ENCODE measurements at regions of chr13 and their contacts with region 1.

Region 1: GRCh38 chr13:50911937-50912795 is 2.6 kb downstream of the RNASEH2B start:
- DNase-seq: peak; percentile 98
- ATAC-seq: peak; percentile 73
- H3K4me3 Mint-ChIP-seq: peak overlapping the region; percentile 91
- H3K27ac Mint-ChIP-seq: peak overlapping the region; percentile 96
- H3K4me1 Mint-ChIP-seq: peaks cover 68% of the 10 kb centered on the region
- H3K27me3 Mint-ChIP-seq: no peaks in the 10 kb centered on the region

Region 2: GRCh38 chr13:50081679-50082425 is 830.3 kb before region 1 on chr13:
- CTCF ChIA-PET with region 1: interaction called, 27 read pairs
- POLR2A ChIA-PET with region 1: interaction called, 38 read pairs
- DNase-seq: peak; percentile 99
- ATAC-seq: peak; percentile 79
- H3K4me3 Mint-ChIP-seq: peak overlapping the region; percentile 99
- H3K27ac Mint-ChIP-seq: peak overlapping the region; percentile 99
- H3K4me1 Mint-ChIP-seq: peaks cover 42% of the 10 kb centered on the region
- H3K27me3 Mint-ChIP-seq: no peaks in the 10 kb centered on the region

Region 3: DNA sequence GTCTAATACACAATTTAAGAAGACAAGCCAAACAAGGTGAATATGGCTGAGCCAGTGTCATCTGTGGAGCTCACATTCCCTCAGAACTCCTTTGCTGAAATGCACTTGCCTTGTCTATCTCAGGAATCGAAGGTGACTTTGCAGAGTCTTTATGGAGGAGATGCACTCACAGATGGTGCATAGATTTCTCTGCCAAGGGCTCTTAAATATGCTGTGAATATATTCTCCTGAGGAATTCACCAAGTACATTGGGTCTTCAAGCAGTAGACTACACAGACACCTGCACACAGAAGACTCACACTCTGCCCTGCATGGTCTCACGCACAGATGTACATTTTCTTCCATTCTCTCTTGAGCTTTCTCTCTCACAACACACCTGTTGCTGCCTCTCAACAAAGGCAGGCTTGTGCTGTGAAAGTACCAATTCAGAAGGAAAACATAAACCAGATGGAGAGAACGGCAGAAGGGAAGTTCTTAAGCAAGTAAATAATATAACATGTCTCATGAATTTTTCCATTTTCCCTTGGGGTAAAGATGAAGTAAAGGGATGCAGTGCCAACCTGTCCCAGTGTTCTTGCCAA is 243.4 kb before region 1 on chr13:
- CTCF ChIA-PET with region 1: no interaction called
- POLR2A ChIA-PET with region 1: no interaction called
- DNase-seq: no peak
- ATAC-seq: no peak
- H3K4me3 Mint-ChIP-seq: no peak overlapping the region
- H3K27ac Mint-ChIP-seq: no peak overlapping the region
- H3K4me1 Mint-ChIP-seq: no peaks in the 10 kb centered on the region
- H3K27me3 Mint-ChIP-seq: peaks cover 3% of the 10 kb centered on the region

Region 4: GRCh38 chr13:50713523-50714248 is 198.5 kb before region 1 on chr13:
- CTCF ChIA-PET with region 1: interaction called, 13 read pairs
- POLR2A ChIA-PET with region 1: interaction called, 3 read pairs
- DNase-seq: peak; percentile 64
- ATAC-seq: peak; percentile 94
- H3K4me3 Mint-ChIP-seq: peak overlapping the region; percentile 39
- H3K27ac Mint-ChIP-seq: peak overlapping the region; percentile 60
- H3K4me1 Mint-ChIP-seq: peaks cover 39% of the 10 kb centered on the region
- H3K27me3 Mint-ChIP-seq: peaks cover 13% of the 10 kb centered on the region

Region 5: GRCh38 chr13:50846861-50847475 is 65.2 kb before region 1 on chr13:
- CTCF ChIA-PET with region 1: interaction called, 15 read pairs
- POLR2A ChIA-PET with region 1: interaction called, 3 read pairs
- DNase-seq: no peak
- ATAC-seq: peak; percentile 33
- H3K4me3 Mint-ChIP-seq: no peak overlapping the region
- H3K27ac Mint-ChIP-seq: peak overlapping the region; percentile 51
- H3K4me1 Mint-ChIP-seq: peaks cover 23% of the 10 kb centered on the region
- H3K27me3 Mint-ChIP-seq: peaks cover 5% of the 10 kb centered on the region

Region 6: DNA sequence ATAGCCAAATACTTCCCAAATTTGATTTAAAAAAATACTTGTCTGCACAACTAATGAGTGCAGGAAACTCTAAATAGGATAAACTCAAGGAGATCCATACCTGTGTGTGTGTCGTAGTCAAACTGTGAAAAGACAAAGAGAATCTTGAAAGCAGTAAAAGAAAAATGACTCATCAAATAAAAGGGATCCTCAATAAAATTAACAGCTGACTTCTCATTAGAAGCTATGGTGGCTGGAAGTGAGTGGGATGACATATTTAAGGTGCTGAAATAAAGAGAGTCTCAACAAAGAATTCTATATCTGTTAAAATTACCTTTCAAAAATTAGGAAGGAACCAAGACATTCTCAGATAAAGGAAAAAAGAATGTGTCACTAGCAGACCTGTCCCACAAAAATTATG is 11.1 kb after region 1 on chr13:
- CTCF ChIA-PET with region 1: interaction called, 10 read pairs
- POLR2A ChIA-PET with region 1: no interaction called
- DNase-seq: no peak
- ATAC-seq: no peak
- H3K4me3 Mint-ChIP-seq: no peak overlapping the region
- H3K27ac Mint-ChIP-seq: no peak overlapping the region
- H3K4me1 Mint-ChIP-seq: peaks cover 11% of the 10 kb centered on the region
- H3K27me3 Mint-ChIP-seq: no peaks in the 10 kb centered on the region

Region 7: DNA sequence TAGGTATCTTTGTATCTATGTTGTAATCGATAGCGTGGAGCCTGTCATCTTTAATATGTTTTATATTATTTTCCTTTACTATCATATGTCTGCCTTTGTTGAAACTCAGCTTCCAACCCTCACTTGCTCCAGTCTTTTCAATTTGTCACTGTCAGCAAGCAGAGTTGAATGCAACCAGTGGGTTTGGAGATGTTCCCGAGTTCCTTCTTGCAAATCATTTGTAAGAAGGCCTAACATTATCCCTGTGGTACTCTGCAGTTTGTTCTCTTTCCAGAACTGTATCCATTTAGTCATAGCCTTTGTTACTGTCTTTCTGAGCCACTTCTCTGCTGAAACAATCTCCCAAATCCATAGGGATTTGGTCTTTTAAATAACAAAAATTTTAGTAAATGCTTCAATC is 39.2 kb after region 1 on chr13:
- CTCF ChIA-PET with region 1: no interaction called
- POLR2A ChIA-PET with region 1: no interaction called
- DNase-seq: no peak
- ATAC-seq: no peak
- H3K4me3 Mint-ChIP-seq: no peak overlapping the region
- H3K27ac Mint-ChIP-seq: no peak overlapping the region
- H3K4me1 Mint-ChIP-seq: no peaks in the 10 kb centered on the region
- H3K27me3 Mint-ChIP-seq: no peaks in the 10 kb centered on the region

Region 8: GRCh38 chr13:51000571-51001260 is 88.5 kb after region 1 on chr13:
- CTCF ChIA-PET with region 1: no interaction called
- POLR2A ChIA-PET with region 1: no interaction called
- DNase-seq: no peak
- ATAC-seq: no peak
- H3K4me3 Mint-ChIP-seq: no peak overlapping the region
- H3K27ac Mint-ChIP-seq: no peak overlapping the region
- H3K4me1 Mint-ChIP-seq: no peaks in the 10 kb centered on the region
- H3K27me3 Mint-ChIP-seq: peaks cover 20% of the 10 kb centered on the region